HEK293 (cell line): ENCODE measurements at regions of chr17 and their contacts with region 1.

Region 1: DNA sequence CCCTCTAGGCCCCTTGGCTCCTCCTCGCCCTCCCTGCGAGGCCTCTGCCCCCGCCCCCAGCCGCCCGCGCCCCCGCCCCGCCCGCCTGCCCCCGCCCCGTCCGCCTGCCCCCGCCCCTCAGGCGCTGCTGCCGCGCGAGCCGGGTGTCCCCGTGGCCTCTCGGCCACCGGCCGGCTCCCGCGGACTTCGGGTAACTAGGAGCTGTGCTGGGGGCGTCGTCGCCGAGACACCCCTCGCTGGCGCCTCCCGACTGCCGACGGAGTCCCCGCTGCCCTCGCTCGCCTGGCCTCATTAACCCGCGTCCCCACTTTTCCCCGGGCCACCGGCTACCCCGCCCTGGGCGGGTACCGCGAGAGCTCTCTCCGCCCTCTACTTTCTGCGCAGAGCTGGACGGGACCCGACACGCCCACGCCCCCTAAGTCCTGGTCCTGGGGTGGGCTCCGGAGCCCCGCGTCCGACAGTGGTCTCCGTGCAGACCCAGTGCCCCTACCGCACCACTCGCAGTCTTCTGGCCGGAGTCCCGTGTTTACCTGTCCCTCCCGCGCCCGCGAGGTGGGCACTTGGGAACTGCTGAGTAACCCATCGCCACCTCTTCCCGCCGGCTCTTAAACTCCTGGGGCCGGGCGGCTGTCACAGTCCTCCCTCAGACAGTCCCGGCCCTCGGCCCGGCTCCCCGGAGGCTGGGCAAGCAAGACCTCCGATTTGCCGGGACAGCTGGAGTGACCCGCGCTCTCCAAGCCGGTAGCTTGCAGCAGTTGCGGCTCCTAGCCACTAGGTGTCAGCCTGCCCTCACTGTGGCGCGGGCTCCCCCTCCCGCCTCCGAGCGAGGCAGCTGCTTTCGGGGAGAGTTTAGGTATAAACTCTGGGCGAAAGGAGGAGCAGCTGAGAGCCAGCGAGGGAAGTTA is at the start of gene TLCD1:
- H3K4me3 ChIP-seq: peak within 1 kb of the TSS; percentile 55
- H3K27ac ChIP-seq: peak within 1 kb of the TSS; percentile 99
- H3K4me1 ChIP-seq: peaks cover 9% of the 10 kb centered on the region; the same call in 1 of the 2 replicates
- CTCF ChIP-seq: peak; percentile 100

Region 2: GRCh38 chr17:28644985-28645939 is 81.2 kb before region 1 on chr17 and contains the start of gene BLTP2:
- CTCF ChIA-PET with region 1: interaction called, 10 read pairs
- POLR2A ChIA-PET with region 1: interaction called, 31 read pairs
- H3K4me3 ChIP-seq: peak within 1 kb of the TSS; percentile 70
- H3K27ac ChIP-seq: peak within 1 kb of the TSS; percentile 55
- H3K4me1 ChIP-seq: peaks cover 5% of the 10 kb centered on the region
- CTCF ChIP-seq: no peak; the same call in 1 of the 2 replicates

Region 3: GRCh38 chr17:28750178-28751047 is 23.9 kb after region 1 on chr17:
- CTCF ChIA-PET with region 1: interaction called, 445 read pairs
- POLR2A ChIA-PET with region 1: interaction called, 448 read pairs
- H3K4me3 ChIP-seq: no peak overlapping the region
- H3K27ac ChIP-seq: 0 out of 2 replicates have a peak overlapping the region, but pooled peaks have one; percentile 12
- H3K4me1 ChIP-seq: peaks cover 8% of the 10 kb centered on the region; the same call in 1 of the 2 replicates
- CTCF ChIP-seq: peak; percentile 96

Region 4: GRCh38 chr17:28818819-28819221 is 92.3 kb after region 1 on chr17:
- CTCF ChIA-PET with region 1: interaction called, 10 read pairs
- POLR2A ChIA-PET with region 1: interaction called, 6 read pairs
- H3K4me3 ChIP-seq: no peak overlapping the region
- H3K27ac ChIP-seq: no peak overlapping the region
- H3K4me1 ChIP-seq: peaks cover 8% of the 10 kb centered on the region; the same call in 1 of the 2 replicates
- CTCF ChIP-seq: no peak

Region 5: DNA sequence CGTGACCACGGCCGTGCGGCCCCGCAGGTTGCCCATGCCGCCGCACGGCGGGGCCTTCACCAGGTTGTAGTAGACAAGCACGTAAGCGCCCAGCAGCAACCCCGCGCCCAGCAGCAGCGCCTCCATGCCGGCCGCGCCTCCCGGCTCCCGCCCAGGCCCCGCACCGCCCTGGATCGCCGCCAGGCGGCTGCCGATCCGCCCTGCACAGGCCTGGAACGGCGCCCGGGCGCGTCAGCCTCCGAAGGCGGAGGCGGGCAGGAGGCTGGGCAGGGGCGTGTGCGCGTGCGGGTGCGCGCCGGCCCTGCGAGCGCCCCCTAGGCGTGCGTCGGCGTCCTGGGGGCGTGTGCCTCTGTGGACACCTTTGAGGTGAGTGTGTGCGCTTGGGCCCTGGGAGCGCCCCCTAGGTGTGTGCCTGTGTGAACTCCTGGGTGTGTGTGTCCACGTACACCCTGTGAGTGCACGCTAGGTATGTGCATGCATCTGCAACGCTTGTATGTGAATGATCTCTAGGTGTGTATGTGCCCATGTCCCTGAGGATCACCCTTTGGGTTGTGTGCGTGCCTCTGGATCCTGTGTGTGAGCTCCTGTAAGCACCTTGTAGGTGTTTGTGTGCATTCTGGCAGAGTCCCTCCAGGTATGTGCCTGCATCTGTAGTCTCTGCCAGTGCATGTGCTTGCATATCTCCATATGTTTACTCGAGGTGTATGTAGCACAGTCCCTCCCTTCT is 176.5 kb after region 1 on chr17 and contains the start of gene DHRS13:
- CTCF ChIA-PET with region 1: interaction called, 61 read pairs
- POLR2A ChIA-PET with region 1: interaction called, 11 read pairs
- H3K4me3 ChIP-seq: peak within 1 kb of the TSS; percentile 65
- H3K27ac ChIP-seq: peak within 1 kb of the TSS; percentile 77
- H3K4me1 ChIP-seq: peaks cover 1% of the 10 kb centered on the region; the same call in 1 of the 2 replicates
- CTCF ChIP-seq: peak; percentile 99

Region 6: DNA sequence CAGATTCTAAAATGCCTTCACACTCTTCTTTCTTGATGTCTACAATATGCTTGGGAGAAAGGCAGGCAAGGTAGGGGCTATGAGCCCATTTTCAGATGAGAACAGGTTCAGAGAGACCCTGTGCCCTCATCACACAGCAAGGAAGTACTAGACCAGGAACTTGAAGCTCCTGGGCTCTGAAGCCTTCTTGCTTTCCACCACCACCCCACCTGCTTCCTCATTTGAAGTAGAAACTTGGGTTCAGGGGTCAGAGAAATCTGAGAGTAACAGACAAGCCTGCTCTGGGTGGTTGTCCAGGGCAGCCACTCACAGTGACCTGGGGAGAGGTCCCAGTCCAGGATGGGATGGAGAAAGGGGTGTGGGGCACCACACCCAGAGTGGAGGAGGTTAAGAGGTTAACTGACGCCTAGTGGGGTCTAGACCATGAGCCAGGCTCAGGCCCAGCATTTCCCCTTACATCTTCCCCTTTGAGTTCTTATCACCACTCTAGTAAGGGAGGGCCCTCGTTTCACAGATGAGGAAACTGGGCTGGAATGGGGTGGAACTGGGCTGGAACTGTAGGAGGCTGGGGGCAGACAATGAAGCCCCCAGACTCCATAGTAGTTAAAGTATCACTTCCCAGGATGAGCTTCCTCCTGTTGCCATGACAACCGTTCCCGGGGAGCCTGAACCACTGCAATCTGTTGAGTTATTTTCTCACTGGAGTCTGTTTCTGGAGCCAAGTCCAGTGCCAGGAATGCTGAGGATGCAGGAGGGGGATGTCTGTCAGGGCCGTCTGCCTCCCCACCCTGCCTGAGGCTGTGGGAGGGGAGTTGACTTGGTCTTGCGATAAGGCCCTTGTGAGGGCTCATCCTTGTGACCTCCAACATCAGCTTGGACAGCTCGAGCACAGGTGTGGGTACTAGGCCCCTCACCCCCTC is 241.0 kb after region 1 on chr17:
- CTCF ChIA-PET with region 1: interaction called, 14 read pairs
- POLR2A ChIA-PET with region 1: interaction called, 7 read pairs
- H3K4me3 ChIP-seq: no peak overlapping the region
- H3K27ac ChIP-seq: no peak overlapping the region
- H3K4me1 ChIP-seq: no peaks in the 10 kb centered on the region
- CTCF ChIP-seq: no peak

Region 7: GRCh38 chr17:29293890-29294579 is 567.6 kb after region 1 on chr17 and contains the start of gene NUFIP2:
- CTCF ChIA-PET with region 1: no interaction called
- POLR2A ChIA-PET with region 1: interaction called, 10 read pairs
- H3K4me3 ChIP-seq: peak within 1 kb of the TSS; percentile 86
- H3K27ac ChIP-seq: peak within 1 kb of the TSS; percentile 99
- H3K4me1 ChIP-seq: peaks cover 11% of the 10 kb centered on the region
- CTCF ChIP-seq: no peak; the same call in 1 of the 2 replicates